Natural killer cell (primary cell): ENCODE measurements at regions of chr7 and their contacts with region 1.

Region 1: GRCh38 chr7:112550468-112551060 is 69.8 kb downstream of the LSMEM1 start:
- DNase-seq: peak in 1 of 2 donors; percentile 77
- ATAC-seq: peak; percentile 71 to 78 (median 72)
- H3K4me3 ChIP-seq: no peak overlapping the region
- H3K4me3 Mint-ChIP-seq: no peak overlapping the region
- H3K27ac ChIP-seq: no peak overlapping the region
- H3K27ac Mint-ChIP-seq: no peak overlapping the region
- H3K4me1 ChIP-seq: no peaks in the 10 kb centered on the region
- H3K4me1 Mint-ChIP-seq: no peaks in the 10 kb centered on the region
- H3K27me3 ChIP-seq: peaks cover 5% of the 10 kb centered on the region
- H3K27me3 Mint-ChIP-seq: no peaks in the 10 kb centered on the region
- CTCF ChIP-seq: peak; percentile 75

Region 2: GRCh38 chr7:112566442-112567324 is 16.1 kb after region 1 on chr7:
- intact Hi-C with region 1: no loop called
- DNase-seq: no peak
- ATAC-seq: no peak
- H3K4me3 ChIP-seq: no peak overlapping the region
- H3K4me3 Mint-ChIP-seq: no peak overlapping the region
- H3K27ac ChIP-seq: no peak overlapping the region
- H3K27ac Mint-ChIP-seq: no peak overlapping the region
- H3K4me1 ChIP-seq: no peaks in the 10 kb centered on the region
- H3K4me1 Mint-ChIP-seq: no peaks in the 10 kb centered on the region
- H3K27me3 ChIP-seq: no peaks in the 10 kb centered on the region
- H3K27me3 Mint-ChIP-seq: peaks cover 0 to 5% of the 10 kb centered on the region in 2 donors
- CTCF ChIP-seq: no peak

Region 3: GRCh38 chr7:112869111-112869757 is 318.7 kb after region 1 on chr7:
- intact Hi-C with region 1: loop called (anchors 1 kb)
- DNase-seq: peak; percentile 41 to 77
- ATAC-seq: peak; percentile 76 to 87 (median 84)
- H3K4me3 ChIP-seq: no peak overlapping the region
- H3K4me3 Mint-ChIP-seq: no peak overlapping the region
- H3K27ac ChIP-seq: no peak overlapping the region
- H3K27ac Mint-ChIP-seq: no peak overlapping the region
- H3K4me1 ChIP-seq: peaks cover 4% of the 10 kb centered on the region
- H3K4me1 Mint-ChIP-seq: peaks cover 24 to 40% of the 10 kb centered on the region in 2 donors
- H3K27me3 ChIP-seq: no peaks in the 10 kb centered on the region
- H3K27me3 Mint-ChIP-seq: no peaks in the 10 kb centered on the region
- CTCF ChIP-seq: peak; percentile 85

Region 4: DNA sequence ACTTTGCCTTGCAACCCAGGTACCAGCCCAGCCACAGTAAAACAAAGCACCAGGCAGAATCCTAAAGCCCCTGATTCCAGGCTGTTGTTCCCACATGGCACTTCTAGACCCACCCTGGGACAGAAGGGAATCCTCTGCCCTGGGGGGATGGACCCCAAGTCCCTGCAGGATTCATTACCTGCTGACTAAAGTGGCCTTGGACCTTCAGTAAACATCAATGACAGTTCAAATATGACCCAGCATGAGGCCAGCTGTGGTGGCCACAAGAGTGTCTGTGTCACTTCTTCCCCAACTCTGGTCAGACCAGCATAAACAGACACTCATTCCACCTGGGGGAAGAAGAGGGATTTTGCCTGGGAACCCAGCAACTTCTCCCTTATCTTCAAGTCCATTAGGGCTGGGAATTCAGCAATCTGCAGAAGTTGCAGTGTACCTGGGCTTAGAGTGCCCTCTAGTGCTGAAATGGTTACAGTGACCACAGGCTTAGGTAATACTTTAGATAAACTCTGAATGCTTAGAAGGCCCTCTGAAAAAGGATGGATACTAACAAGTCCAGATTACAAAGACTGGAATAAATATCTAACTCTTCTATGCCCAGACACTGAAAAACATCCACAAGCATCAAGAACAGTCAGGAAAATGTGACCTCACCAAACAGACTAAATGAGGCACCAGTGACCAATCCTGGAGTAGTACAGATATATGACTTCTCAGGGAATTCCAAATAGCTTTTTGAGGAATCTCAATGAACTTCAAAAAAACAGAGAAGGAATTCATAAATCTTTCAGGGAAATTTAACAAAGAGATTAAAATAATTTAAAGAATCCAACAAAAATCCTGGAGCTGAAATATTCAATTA is 348.1 kb after region 1 on chr7:
- intact Hi-C with region 1: loop called (anchors 1 kb)
- DNase-seq: peak in 1 of 2 donors; percentile 66
- ATAC-seq: peak; percentile 72 to 83 (median 79)
- H3K4me3 ChIP-seq: no peak overlapping the region
- H3K4me3 Mint-ChIP-seq: no peak overlapping the region
- H3K27ac ChIP-seq: no peak overlapping the region
- H3K27ac Mint-ChIP-seq: peak overlapping the region in 1 of 2 donors; percentile 4
- H3K4me1 ChIP-seq: no peaks in the 10 kb centered on the region
- H3K4me1 Mint-ChIP-seq: peaks cover 11 to 19% of the 10 kb centered on the region in 2 donors
- H3K27me3 ChIP-seq: no peaks in the 10 kb centered on the region
- H3K27me3 Mint-ChIP-seq: no peaks in the 10 kb centered on the region
- CTCF ChIP-seq: peak; percentile 75

Region 5: DNA sequence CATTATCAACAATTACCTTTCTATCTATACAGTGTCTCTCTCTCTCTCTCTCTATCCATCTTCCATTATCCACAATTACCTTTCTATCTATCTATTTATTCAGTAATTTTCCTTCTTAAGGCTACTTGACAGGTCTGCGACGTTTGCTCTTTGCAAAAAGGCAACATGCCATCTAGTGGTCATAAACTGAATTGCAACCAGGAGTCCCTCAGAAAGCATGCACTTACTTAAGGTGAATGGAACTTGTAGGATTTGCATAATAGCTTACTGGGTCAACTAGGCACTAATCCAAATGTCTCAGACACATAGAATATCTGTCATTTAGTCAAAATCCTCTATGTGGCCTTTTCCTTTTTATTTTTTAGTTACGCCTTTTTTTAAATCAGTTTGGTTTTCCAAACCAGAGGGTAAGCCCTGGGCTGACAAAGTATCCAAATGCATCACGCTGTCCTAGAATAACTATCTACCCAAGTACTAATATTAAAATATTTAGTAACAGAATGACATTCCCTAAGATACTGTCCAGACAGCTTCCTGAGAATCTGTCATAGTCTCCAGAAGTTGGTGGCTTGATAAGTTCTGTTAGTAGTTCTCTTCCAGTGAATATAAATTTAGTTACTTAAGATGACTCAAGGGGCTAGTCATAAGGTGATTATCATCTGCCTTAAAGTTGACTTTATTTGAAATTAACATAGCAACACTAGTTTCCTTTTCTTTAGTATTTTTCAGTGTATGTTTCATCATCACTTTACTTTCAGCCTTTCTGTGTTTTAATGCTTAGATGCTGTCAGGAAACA is 1159.9 kb after region 1 on chr7:
- intact Hi-C with region 1: loop called (anchors 5 kb)
- DNase-seq: peak in 1 of 2 donors; percentile 78
- ATAC-seq: peak in 2 of 3 donors; percentile 52 to 53
- H3K4me3 ChIP-seq: no peak overlapping the region
- H3K4me3 Mint-ChIP-seq: no peak overlapping the region
- H3K27ac ChIP-seq: no peak overlapping the region
- H3K27ac Mint-ChIP-seq: no peak overlapping the region
- H3K4me1 ChIP-seq: no peaks in the 10 kb centered on the region
- H3K4me1 Mint-ChIP-seq: no peaks in the 10 kb centered on the region
- H3K27me3 ChIP-seq: no peaks in the 10 kb centered on the region
- H3K27me3 Mint-ChIP-seq: no peaks in the 10 kb centered on the region
- CTCF ChIP-seq: peak; percentile 85